HAP-1 (cell line): ENCODE measurements at regions of chr5 and their contacts with region 1.

Region 1: GRCh38 chr5:62448528-62448927 is 36.0 kb downstream of the IPO11 start:
- DNase-seq: no peak
- H3K4me3 ChIP-seq: no peak overlapping the region
- H3K4me1 ChIP-seq: peaks cover 4% of the 10 kb centered on the region; the same call in 1 of the 2 replicates
- H3K27me3 ChIP-seq: no peaks in the 10 kb centered on the region

Region 2: GRCh38 chr5:61910771-61911170 is 537.8 kb before region 1 on chr5:
- in situ Hi-C with region 1: no loop called
- DNase-seq: no peak
- H3K4me3 ChIP-seq: no peak overlapping the region
- H3K4me1 ChIP-seq: peaks cover 2% of the 10 kb centered on the region; the same call in 1 of the 2 replicates
- H3K27me3 ChIP-seq: no peaks in the 10 kb centered on the region

Region 3: GRCh38 chr5:62315376-62316175 is 133.0 kb before region 1 on chr5:
- in situ Hi-C with region 1: no loop called
- DNase-seq: no peak
- H3K4me3 ChIP-seq: no peak overlapping the region
- H3K4me1 ChIP-seq: peaks cover 14% of the 10 kb centered on the region
- H3K27me3 ChIP-seq: no peaks in the 10 kb centered on the region

Region 4: GRCh38 chr5:62362701-62363100 is 85.8 kb before region 1 on chr5:
- in situ Hi-C with region 1: no loop called
- DNase-seq: no peak
- H3K4me3 ChIP-seq: no peak overlapping the region
- H3K4me1 ChIP-seq: no peaks in the 10 kb centered on the region
- H3K27me3 ChIP-seq: no peaks in the 10 kb centered on the region

Region 5: DNA sequence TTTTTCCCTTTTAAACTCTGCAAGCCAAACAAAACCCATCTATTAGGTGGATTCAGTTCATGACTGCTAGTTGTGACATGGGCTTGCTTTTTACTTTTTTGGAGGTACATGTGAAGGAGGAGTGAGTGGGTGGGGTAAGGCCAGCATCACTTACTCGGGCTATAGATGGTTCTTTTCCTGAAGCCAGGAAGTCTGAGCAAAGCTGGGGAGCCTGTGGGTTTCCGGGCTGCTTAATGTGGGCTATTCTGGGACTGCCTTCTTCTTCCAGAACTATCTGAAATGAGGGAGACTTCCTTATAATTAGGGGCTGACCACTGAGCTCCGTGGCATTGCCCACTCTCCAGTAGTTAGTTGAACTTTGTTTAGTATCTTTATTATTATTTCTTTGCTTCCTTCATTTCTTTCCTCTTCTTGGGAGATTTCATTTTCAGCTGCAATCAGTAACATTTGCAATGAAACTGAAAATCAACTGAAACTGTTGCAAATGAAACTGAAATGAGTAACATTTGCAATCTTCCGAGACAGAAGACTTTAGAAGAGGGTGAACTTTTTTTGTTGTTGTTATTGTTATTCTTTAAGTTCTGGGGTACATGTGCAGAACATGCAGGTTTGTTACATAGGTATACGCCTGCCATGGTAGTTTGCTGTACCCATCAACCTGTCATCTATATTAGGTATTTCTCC is 335.0 kb after region 1 on chr5:
- in situ Hi-C with region 1: loop called (anchors 10 kb)
- DNase-seq: no peak
- H3K4me3 ChIP-seq: no peak overlapping the region
- H3K4me1 ChIP-seq: no peaks in the 10 kb centered on the region
- H3K27me3 ChIP-seq: 0 out of 2 replicates have a peak, but pooled peaks cover 4% of the 10 kb centered on the region